ENCODE measurements at regions of chr1 and their contacts with region 1.

Region 1: GRCh38 chr1:108661030-108661620 is at the start of gene HENMT1:
- DNase-seq: no peak

Region 2: GRCh38 chr1:108533351-108534083 is 127.6 kb before region 1 on chr1:
- CTCF ChIA-PET with region 1: no interaction called
- POLR2A ChIA-PET with region 1: no interaction called
- DNase-seq: no peak

Region 3: GRCh38 chr1:108708691-108709660 is 47.9 kb after region 1 on chr1:
- CTCF ChIA-PET with region 1: interaction called, 11 read pairs
- POLR2A ChIA-PET with region 1: no interaction called
- DNase-seq: peak; percentile 40

Measured in HEK293T (cell line).